MCF 10A (cell line): ENCODE measurements at regions of chr5 and their contacts with region 1.

Region 1: DNA sequence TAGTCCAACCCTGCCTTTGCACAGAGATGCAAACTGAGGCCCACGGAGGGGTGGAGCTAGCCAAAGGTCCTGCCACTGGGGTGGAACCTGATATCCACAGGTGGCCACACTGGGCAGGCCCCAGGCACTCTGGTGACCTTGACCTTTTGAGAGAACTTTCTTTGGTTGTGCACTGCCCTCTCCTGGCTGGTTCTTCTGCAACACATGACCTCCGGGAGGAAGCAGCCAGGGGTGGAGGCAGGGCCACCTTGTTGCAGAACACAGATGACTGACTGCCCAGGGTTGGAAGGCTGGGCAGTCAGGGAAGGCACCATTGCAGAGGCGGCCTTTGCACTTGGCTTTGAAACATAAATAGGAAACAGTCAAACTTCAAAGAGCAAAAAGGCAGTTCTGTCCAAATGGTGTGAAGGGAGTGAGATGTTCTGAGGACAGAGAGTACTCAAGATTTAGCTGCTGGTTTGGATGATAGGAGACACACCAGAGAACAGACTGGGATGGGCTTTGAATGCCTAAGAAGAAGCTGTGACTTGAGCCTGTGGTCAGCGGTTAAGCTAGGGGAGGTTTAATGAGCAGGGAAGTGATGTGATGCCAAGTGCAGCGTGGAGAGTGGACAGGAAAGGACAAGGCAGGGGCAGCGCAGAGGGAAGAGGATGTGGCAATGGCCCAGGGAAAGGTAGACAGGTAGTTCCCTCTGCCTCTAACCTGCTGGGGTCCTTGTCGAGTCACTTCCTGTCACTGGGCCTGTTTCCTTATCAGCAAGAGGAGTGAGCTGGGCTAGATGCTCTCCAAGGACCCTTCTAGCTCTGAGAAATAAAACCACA is 6.8 kb upstream of the TCOF1 start:
- DNase-seq: peak; percentile 91
- H3K4me3 Mint-ChIP-seq: no peak overlapping the region
- H3K27ac Mint-ChIP-seq: no peak overlapping the region
- H3K4me1 Mint-ChIP-seq: peaks cover 6% of the 10 kb centered on the region
- H3K27me3 Mint-ChIP-seq: no peaks in the 10 kb centered on the region
- CTCF ChIP-seq: peak; percentile 94

Region 2: GRCh38 chr5:150161242-150162141 is 189.2 kb before region 1 on chr5:
- CTCF ChIA-PET with region 1: interaction called, 36 read pairs
- POLR2A ChIA-PET with region 1: no interaction called
- intact Hi-C with region 1: loop called (anchors 1 kb)
- DNase-seq: peak; percentile 88
- H3K4me3 Mint-ChIP-seq: no peak overlapping the region
- H3K27ac Mint-ChIP-seq: no peak overlapping the region
- H3K4me1 Mint-ChIP-seq: peaks cover 12% of the 10 kb centered on the region
- H3K27me3 Mint-ChIP-seq: no peaks in the 10 kb centered on the region
- CTCF ChIP-seq: peak; percentile 98

Region 3: DNA sequence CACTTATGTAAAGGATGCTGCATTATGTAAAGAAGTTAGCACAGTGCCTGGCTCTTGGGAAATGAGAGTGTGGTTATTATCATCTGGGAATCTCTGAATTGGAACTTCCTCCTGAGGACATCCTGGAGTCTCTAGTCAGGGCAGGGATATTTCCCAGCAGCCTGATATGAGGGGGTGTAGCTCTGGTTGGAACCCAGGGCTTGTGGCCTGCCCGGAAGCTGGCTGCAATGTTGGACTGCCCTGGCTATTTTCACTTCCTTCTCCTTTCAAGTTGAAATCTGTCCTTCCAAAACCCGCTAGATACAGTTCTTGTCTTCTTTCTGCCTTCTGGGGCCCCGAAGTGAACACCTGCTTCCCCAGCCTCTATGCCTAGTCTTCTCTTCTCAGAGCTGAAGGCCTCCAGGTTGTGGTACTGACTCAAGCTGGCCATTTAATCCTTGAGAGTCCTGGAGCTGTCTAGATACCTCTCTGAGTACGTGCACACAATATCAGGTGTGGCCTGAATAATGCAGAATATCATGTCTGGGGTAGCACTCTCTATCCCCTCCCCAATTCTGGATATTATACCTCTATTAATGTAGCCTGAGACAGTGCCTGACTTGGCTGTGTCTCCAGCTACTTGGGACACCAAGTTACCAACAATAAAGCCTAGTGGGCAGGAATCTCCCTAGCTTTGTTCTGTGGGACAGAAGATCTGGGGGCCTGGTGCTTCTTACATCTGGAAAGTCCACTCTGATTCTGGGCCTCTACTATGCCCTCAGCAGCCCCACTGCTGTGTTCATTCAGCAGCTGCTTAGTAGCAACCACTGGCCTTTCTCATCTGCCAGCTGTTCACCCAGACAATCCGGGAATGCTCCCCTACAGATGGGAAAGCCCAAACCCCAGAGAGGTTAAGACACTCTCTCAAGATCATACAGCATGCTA is 115.9 kb before region 1 on chr5:
- CTCF ChIA-PET with region 1: interaction called, 10 read pairs
- POLR2A ChIA-PET with region 1: no interaction called
- intact Hi-C with region 1: no loop called
- DNase-seq: no peak
- H3K4me3 Mint-ChIP-seq: no peak overlapping the region
- H3K27ac Mint-ChIP-seq: no peak overlapping the region
- H3K4me1 Mint-ChIP-seq: no peaks in the 10 kb centered on the region
- H3K27me3 Mint-ChIP-seq: no peaks in the 10 kb centered on the region
- CTCF ChIP-seq: no peak

Region 4: GRCh38 chr5:150272526-150272925 is 78.2 kb before region 1 on chr5:
- CTCF ChIA-PET with region 1: interaction called, 290 read pairs
- POLR2A ChIA-PET with region 1: interaction called, 15 read pairs
- intact Hi-C with region 1: loop called (anchors 1 kb)
- DNase-seq: peak; percentile 81
- H3K4me3 Mint-ChIP-seq: no peak overlapping the region
- H3K27ac Mint-ChIP-seq: no peak overlapping the region
- H3K4me1 Mint-ChIP-seq: peaks cover 10% of the 10 kb centered on the region
- H3K27me3 Mint-ChIP-seq: no peaks in the 10 kb centered on the region
- CTCF ChIP-seq: peak; percentile 84

Region 5: DNA sequence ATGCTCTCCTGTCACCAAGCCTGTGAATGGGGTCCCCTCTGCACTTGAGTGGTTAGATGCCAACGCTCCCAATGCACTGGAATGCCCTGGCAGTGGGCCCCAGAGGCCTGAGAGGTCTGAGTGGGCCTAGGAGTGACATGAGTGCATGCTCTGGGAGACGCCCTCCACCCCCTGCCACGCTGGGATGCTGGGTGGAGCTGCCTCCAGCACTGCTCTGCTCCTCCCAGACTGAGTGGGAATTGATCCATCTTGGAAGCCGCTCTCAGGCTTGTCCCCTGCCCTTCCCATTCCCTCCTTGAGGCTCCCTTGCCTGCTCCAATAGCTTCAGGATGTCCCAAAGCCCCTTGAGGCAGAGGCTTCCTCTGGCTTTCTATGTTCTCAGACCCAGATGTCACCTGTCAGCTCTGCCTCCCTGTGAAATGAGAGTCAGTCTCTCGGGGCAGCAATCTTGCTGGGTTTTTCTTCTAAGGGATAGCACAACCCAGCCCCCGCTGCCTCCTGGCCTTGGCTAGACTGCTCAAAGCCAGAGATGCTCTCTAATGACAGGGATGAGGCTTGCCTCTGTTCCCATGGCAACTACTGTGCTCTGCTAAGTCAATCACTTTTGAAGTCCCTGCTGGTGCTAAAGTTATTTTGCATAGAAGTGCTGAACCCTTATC is 41.4 kb before region 1 on chr5:
- CTCF ChIA-PET with region 1: interaction called, 10 read pairs
- POLR2A ChIA-PET with region 1: interaction called, 3 read pairs
- intact Hi-C with region 1: no loop called
- DNase-seq: no peak
- H3K4me3 Mint-ChIP-seq: no peak overlapping the region
- H3K27ac Mint-ChIP-seq: no peak overlapping the region
- H3K4me1 Mint-ChIP-seq: peaks cover 7% of the 10 kb centered on the region
- H3K27me3 Mint-ChIP-seq: no peaks in the 10 kb centered on the region
- CTCF ChIP-seq: no peak

Region 6: GRCh38 chr5:150339165-150339564 is 11.6 kb before region 1 on chr5:
- CTCF ChIA-PET with region 1: interaction called, 52 read pairs
- POLR2A ChIA-PET with region 1: interaction called, 3 read pairs
- intact Hi-C with region 1: no loop called
- DNase-seq: no peak
- H3K4me3 Mint-ChIP-seq: no peak overlapping the region
- H3K27ac Mint-ChIP-seq: no peak overlapping the region
- H3K4me1 Mint-ChIP-seq: no peaks in the 10 kb centered on the region
- H3K27me3 Mint-ChIP-seq: no peaks in the 10 kb centered on the region
- CTCF ChIP-seq: no peak

Region 7: DNA sequence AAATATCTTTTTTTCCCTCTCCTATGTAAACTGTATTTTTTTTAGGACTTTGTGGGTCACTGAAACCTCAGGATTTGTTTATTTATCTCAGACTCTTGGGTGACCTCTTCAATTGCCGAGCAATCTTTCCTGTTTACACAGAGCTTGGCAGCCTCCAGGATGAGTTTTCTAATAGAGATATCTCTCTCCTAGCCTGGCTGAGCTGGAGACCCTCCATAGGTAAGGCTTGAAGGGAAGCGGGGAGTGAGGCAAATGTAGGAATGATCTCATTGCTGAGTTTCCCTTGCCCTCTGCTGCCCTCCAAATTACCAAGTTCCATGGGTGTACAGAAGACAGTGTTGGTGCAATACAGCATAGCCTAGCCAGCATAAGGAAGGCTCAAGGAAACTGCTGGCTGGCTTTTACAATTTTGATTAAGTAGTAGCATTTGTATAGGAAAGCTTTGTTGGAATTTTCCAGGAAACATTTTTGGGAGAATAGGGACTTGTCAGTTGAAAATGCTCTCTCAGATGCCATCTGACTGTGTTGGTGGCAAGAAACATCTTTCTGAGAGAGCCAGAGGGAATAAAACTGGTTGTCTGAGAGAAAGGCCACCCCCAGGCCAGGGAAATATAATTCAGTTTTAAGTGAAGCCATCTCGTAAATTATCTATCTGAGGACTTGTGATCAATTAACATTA is 1938.3 kb after region 1 on chr5:
- CTCF ChIA-PET with region 1: no interaction called
- POLR2A ChIA-PET with region 1: no interaction called
- intact Hi-C with region 1: no loop called
- DNase-seq: no peak
- H3K4me3 Mint-ChIP-seq: no peak overlapping the region
- H3K27ac Mint-ChIP-seq: no peak overlapping the region
- H3K4me1 Mint-ChIP-seq: no peaks in the 10 kb centered on the region
- H3K27me3 Mint-ChIP-seq: no peaks in the 10 kb centered on the region
- CTCF ChIP-seq: no peak